ENCODE measurements at regions of chr10 and their contacts with region 1.

Region 1: GRCh38 chr10:6151087-6151977 is 51.4 kb upstream of the PFKFB3 start:
- DNase-seq: peak; percentile 78
- CTCF ChIP-seq: peak; percentile 71

Region 2: GRCh38 chr10:6108603-6109443 is 42.5 kb before region 1 on chr10:
- CTCF ChIA-PET with region 1: interaction called, 113 read pairs
- POLR2A ChIA-PET with region 1: no interaction called
- DNase-seq: peak; percentile 58
- CTCF ChIP-seq: peak; percentile 52

Region 3: DNA sequence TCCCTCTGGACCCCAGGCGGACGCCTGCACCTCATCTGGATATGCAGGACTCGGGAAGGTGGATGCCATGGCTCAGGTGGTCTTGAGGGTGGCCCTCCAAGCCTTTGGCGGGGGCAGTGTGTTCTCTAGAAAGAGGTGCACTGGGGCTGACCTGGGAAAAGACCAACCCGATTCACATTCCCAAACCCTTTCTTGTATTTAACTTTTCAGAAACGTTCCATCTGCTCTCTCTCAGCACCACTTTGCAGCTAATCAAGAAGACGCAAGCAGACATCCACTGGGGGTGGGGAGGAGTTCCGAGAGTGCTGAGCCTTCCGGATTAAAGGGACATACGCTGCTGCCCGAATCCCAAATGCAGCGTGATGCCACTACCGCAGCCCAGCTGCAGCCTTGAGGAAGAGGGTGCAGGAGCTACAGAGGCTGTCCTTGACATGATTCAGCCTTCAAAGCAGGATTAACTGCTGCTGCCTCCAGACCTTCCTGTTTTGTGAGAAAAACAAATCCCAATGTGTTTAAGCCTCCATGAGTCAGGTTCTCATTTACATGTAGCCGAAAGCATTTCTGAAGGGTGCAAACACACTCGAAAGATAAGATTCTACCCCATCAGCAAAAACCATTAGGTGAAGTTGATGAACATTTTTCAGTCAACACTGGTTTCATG is 22.6 kb before region 1 on chr10:
- CTCF ChIA-PET with region 1: interaction called, 99 read pairs
- POLR2A ChIA-PET with region 1: no interaction called
- DNase-seq: no peak
- CTCF ChIP-seq: no peak

Region 4: GRCh38 chr10:6163364-6164270 is 12.3 kb after region 1 on chr10:
- CTCF ChIA-PET with region 1: interaction called, 47 read pairs
- POLR2A ChIA-PET with region 1: no interaction called
- DNase-seq: peak; percentile 97
- CTCF ChIP-seq: peak; percentile 13

Measured in GM10248 (cell line).